T-cell (primary cell): ENCODE measurements at regions of chr1 and their contacts with region 1.

Region 1: DNA sequence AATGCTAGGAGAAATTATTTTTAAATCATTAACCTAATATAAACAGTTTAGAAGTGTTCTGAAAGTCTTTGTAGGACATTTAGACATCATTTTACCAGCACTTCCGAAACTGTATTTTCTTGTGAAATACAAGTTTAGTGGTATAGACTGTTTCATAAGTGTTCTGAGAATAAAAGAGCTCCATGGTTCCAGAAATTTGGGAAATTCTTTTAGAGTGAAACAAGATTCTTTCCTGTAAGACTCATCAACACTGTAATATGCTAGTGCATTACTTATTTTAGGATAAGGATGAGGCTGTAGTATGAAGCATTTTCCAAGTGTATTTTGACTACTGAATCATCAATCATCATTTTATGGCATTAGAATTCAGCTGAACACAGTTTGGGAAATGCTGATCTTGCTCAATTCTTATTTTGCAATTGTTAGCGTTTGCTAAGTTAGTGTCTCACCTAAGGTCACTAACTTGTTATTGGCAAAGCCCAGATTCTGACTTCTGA is 73.4 kb downstream of the CEP350 start:
- DNase-seq: no peak
- ATAC-seq: no peak
- H3K4me3 ChIP-seq: no peak overlapping the region
- H3K4me3 Mint-ChIP-seq: no peak overlapping the region
- H3K27ac ChIP-seq: no peak overlapping the region
- H3K27ac Mint-ChIP-seq: no peak overlapping the region
- H3K4me1 ChIP-seq: no peaks in the 10 kb centered on the region
- H3K4me1 Mint-ChIP-seq: peaks cover 2 to 11% (median 3%) of the 10 kb centered on the region in 3 donors
- H3K27me3 ChIP-seq: no peaks in the 10 kb centered on the region
- H3K27me3 Mint-ChIP-seq: no peaks in the 10 kb centered on the region

Region 2: GRCh38 chr1:181818943-181819342 is 1790.9 kb after region 1 on chr1:
- CTCF ChIA-PET with region 1: no interaction called
- POLR2A ChIA-PET with region 1: interaction called in 1 of 2 experiments, 10 read pairs
- DNase-seq: no peak
- ATAC-seq: no peak
- H3K4me3 ChIP-seq: no peak overlapping the region
- H3K4me3 Mint-ChIP-seq: no peak overlapping the region
- H3K27ac ChIP-seq: no peak overlapping the region
- H3K27ac Mint-ChIP-seq: no peak overlapping the region
- H3K4me1 ChIP-seq: no peaks in the 10 kb centered on the region
- H3K4me1 Mint-ChIP-seq: no peaks in the 10 kb centered on the region
- H3K27me3 ChIP-seq: no peaks in the 10 kb centered on the region
- H3K27me3 Mint-ChIP-seq: peaks cover 9 to 30% of the 10 kb centered on the region in 2 donors